ENCODE measurements at regions of chr18 and their contacts with region 1.

Region 1: GRCh38 chr18:34219651-34220050 is 5.1 kb downstream of the NOL4 start:
- DNase-seq: no peak
- ATAC-seq: no peak
- H3K4me3 ChIP-seq: no peak overlapping the region
- H3K27ac ChIP-seq: no peak overlapping the region
- H3K4me1 ChIP-seq: no peaks in the 10 kb centered on the region
- H3K27me3 ChIP-seq: no peaks in the 10 kb centered on the region
- CTCF ChIP-seq: no peak
- POLR2A ChIP-seq: no peak
- RAD21 ChIP-seq: no peak

Region 2: DNA sequence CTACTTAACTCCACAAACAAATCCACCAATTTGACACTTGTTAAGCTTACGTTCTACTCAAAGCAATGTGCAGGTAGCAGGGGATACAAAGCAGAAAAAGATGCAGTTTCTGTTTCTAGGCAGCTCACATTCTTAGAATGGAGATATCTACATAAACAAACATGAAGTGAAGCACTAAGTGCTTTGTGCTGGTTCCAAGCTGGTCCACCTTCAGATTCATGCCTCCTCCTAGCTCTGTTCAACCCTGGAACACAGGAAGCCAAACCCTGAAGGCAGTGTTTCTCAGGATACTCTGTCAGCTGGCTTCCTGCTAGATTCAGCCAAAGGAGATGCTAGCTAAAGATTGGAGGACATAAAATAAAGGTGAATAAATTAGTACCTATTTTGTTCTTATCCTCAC is 60.3 kb after region 1 on chr18:
- CTCF ChIA-PET with region 1: no interaction called
- POLR2A ChIA-PET with region 1: no interaction called
- RAD21 ChIA-PET with region 1: no interaction called
- intact Hi-C with region 1: loop called (anchors 10 kb)
- DNase-seq: no peak
- ATAC-seq: no peak
- H3K4me3 ChIP-seq: no peak overlapping the region
- H3K27ac ChIP-seq: no peak overlapping the region
- H3K4me1 ChIP-seq: no peaks in the 10 kb centered on the region
- H3K27me3 ChIP-seq: no peaks in the 10 kb centered on the region
- CTCF ChIP-seq: no peak
- POLR2A ChIP-seq: no peak
- RAD21 ChIP-seq: no peak

Region 3: DNA sequence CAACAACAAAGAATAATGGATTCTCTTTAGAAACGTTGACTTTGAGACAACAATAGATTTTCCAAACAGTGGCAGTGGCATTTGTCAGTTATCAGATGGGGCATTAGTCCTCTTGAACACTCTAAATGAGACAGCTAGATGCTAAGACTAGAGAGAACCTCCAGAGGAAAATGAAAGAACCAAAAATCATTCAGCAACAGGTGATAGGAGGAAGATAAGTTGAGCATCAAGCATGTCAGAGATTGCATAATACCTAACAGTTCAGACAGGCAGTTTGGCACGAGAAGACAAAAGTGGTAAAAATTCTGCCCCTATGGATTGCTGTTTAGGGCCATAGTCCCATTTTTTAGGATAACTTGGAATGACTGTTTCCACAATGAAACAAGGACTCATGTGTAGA is 72.9 kb after region 1 on chr18:
- CTCF ChIA-PET with region 1: no interaction called
- POLR2A ChIA-PET with region 1: no interaction called
- RAD21 ChIA-PET with region 1: no interaction called
- intact Hi-C with region 1: no loop called
- DNase-seq: no peak
- ATAC-seq: no peak
- H3K4me3 ChIP-seq: no peak overlapping the region
- H3K27ac ChIP-seq: no peak overlapping the region
- H3K4me1 ChIP-seq: no peaks in the 10 kb centered on the region
- H3K27me3 ChIP-seq: no peaks in the 10 kb centered on the region
- CTCF ChIP-seq: no peak
- POLR2A ChIP-seq: no peak
- RAD21 ChIP-seq: no peak

Measured in HCT116 (cell line).